ENCODE measurements at regions of chr2 and their contacts with region 1.

Region 1: GRCh38 chr2:205766779-205767359 is 84.6 kb downstream of the NRP2 start:
- ATAC-seq: no peak
- H3K4me3 ChIP-seq: no peak overlapping the region
- H3K27ac ChIP-seq: no peak overlapping the region
- H3K4me1 ChIP-seq: peaks cover 58 to 63% of the 10 kb centered on the region in 2 donors

Region 2: DNA sequence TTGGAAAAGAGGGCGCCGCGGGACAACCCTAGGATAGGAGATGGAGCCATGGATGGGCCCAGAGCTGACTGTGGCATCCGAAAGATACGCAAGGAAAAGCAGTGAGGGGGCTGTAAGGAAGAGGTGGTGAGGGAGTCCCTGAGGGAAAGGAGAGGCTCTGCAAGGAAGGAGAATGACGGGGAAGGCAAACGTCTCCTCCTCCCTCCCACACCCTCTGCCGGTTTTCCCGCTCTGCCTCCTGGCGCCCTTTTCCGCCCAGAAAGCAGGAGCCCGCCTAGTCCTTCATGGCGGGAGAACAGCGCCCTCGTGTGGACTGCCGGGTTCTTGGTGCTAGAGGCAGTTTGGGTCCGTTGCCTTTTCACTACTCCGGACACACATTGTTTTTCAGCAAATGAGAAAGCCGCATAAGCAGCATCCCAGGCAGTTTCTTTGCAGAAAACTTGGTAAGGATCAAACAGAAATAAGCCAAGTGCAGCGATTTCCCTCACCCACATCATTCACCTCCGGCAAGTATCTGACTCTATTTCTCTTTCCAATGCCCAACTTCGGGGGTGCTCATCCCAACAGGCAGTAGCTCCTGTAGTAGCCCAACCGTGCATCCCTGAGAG is 118.7 kb after region 1 on chr2:
- in situ Hi-C with region 1: loop called in 3 of 9 experiments (anchors 10 to 25 kb)
- ATAC-seq: peak in 5 of 8 experiments; percentile 25 to 100 (median 98)
- H3K4me3 ChIP-seq: no peak overlapping the region
- H3K27ac ChIP-seq: no peak overlapping the region
- H3K4me1 ChIP-seq: peaks cover 18 to 24% of the 10 kb centered on the region in 2 donors

Region 3: DNA sequence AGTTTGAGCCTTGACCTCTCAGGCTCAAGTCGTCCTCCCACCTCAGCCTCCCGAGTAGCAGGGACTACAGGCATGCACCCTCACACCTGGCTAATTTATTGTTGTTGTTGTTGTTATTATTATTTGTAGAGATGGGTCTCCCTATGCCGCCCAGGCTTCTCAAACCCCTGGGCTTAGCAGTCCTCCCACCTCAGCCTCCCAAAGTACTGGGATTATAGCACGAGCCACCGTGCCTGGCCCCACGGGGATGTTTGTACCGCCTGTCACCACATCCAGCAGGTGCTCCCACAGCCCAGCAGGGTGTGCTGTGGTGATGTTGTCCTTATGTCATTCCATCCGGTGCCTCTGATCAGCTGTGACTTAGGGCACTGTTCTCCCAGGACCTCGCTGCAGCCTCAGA is 136.8 kb after region 1 on chr2:
- in situ Hi-C with region 1: loop called in 2 of 9 experiments (anchors 25 kb)
- ATAC-seq: peak in 3 of 8 experiments; percentile 78 to 94 (median 82)
- H3K4me3 ChIP-seq: no peak overlapping the region
- H3K27ac ChIP-seq: no peak overlapping the region
- H3K4me1 ChIP-seq: peaks cover 25 to 36% of the 10 kb centered on the region in 2 donors

Region 4: GRCh38 chr2:205947621-205948495 is 181.0 kb after region 1 on chr2:
- in situ Hi-C with region 1: loop called in 1 of 9 experiments (anchors 25 kb)
- ATAC-seq: peak; percentile 65 to 88 (median 82)
- H3K4me3 ChIP-seq: no peak overlapping the region
- H3K27ac ChIP-seq: no peak overlapping the region
- H3K4me1 ChIP-seq: peaks cover 7 to 10% of the 10 kb centered on the region in 2 donors